Common myeloid progenitor, CD34-positive (primary cell): ENCODE measurements at regions of chr4 and their contacts with region 1.

Region 1: GRCh38 chr4:40897557-40898203 is 147.9 kb downstream of the NSUN7 start:
- DNase-seq: peak; percentile 65 to 70 (median 70)
- H3K4me3 ChIP-seq: peak overlapping the region in 5 of 7 experiments; percentile 10 to 63 (median 35)
- H3K27ac ChIP-seq: no peak overlapping the region
- H3K4me1 ChIP-seq: peaks cover 0 to 2% (median 0%) of the 10 kb centered on the region in 4 experiments
- H3K27me3 ChIP-seq: no peaks in the 10 kb centered on the region

Region 2: DNA sequence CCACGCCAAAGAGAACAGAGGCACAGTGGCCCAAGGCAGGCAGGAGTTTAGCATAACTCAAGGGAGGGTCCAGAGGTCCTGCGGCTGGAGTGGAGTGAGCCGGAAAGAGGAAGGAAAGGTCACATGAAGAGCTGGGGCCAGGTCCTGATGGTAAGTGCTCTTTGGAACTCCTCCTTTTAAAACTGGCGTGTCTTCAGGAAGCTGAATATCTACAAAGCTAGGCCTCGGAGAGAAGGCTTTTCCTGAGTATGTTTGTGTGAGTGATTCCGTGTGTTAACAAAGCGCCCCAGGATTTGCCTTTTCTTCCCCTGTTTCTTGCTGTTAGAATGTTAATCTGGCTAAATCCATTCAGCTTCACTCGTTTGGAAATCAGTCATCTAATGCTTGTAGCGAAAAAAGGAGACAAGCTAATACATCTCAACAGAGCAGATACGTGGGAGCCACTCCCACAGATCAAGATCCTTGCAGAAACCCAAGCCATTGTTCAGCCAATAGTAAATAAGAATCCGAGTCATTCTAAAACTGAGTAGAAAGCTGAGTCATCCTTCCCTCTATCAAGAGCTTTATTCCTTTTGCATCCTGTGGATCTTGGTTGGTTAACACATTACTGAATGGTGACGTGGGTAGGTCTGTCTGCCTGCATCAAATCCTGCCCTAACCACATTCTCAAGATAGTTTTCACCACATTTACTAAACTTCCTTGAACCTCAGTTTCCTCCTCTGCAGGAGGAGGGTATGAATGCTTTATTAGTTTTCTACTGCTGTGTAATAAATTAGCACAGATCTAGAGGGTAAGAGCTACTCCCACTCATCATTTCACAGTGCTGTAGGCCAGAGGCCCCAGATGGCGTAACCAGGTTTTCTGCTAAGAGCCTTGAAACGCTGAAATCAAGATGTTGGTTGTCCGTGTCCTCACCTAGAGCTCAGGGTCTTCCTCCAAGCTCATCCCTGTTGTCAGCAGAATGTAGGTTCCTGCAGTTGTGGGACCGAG is 224.8 kb before region 1 on chr4:
- CTCF ChIA-PET with region 1: no interaction called
- POLR2A ChIA-PET with region 1: no interaction called
- DNase-seq: peak; percentile 90 to 97 (median 95)
- H3K4me3 ChIP-seq: peak overlapping the region in 2 of 7 experiments; percentile 12 to 50
- H3K27ac ChIP-seq: peak overlapping the region in 1 of 2 experiments; percentile 2
- H3K4me1 ChIP-seq: peaks cover 0 to 25% (median 9%) of the 10 kb centered on the region in 4 experiments
- H3K27me3 ChIP-seq: no peaks in the 10 kb centered on the region

Region 3: DNA sequence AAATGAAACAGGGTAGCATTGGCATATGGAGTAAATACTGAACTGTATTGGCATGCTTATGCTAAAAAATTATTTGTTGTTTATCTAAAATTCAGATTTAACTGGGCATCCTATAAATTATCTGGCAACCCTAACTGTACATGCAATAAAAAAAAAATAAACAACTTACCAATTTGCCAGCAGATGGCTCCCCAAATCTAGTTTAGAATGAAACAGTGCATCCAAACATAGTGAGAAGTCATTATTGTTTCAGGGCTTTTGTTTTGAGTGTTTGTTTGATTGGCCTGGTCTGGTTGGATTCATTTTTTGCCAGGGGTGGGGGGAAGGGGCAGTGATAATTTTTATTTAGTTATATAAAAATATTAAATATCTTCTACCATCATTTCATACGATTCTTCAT is 160.8 kb before region 1 on chr4:
- CTCF ChIA-PET with region 1: interaction called, 25 read pairs
- POLR2A ChIA-PET with region 1: no interaction called
- DNase-seq: peak; percentile 49 to 74 (median 69)
- H3K4me3 ChIP-seq: no peak overlapping the region
- H3K27ac ChIP-seq: no peak overlapping the region
- H3K4me1 ChIP-seq: peaks cover 5 to 11% (median 10%) of the 10 kb centered on the region in 4 experiments
- H3K27me3 ChIP-seq: no peaks in the 10 kb centered on the region

Region 4: DNA sequence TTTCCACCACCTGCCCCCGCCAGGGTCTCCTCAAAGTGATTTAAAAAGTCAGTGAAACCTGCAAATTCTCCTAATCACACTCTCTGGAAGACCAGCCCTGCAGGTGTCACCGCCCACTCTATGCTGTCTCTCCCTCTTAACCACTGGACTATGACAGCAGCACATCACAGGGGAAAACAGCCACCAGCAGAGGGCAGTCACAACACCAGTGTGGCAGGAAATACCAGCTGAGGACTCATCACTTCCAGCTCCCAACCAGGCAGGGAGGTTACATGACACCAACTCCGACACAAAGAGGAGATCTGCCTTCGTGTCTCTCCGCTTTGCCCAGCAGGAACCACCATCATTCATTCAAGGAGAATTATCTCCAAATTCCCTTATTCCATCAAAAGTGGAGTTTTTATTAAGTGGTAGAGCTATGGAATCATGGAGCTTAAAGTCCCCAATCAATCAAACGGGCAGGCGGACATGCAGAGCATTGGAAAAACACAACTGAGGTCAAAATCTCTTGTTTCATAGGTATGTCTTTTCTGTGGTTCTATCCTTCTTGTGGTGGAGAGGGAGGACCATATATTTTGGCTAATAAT is 56.6 kb before region 1 on chr4:
- CTCF ChIA-PET with region 1: interaction called, 13 read pairs
- POLR2A ChIA-PET with region 1: no interaction called
- DNase-seq: peak; percentile 67 to 80 (median 77)
- H3K4me3 ChIP-seq: no peak overlapping the region
- H3K27ac ChIP-seq: no peak overlapping the region
- H3K4me1 ChIP-seq: peaks cover 0 to 2% (median 0%) of the 10 kb centered on the region in 4 experiments
- H3K27me3 ChIP-seq: no peaks in the 10 kb centered on the region

Region 5: DNA sequence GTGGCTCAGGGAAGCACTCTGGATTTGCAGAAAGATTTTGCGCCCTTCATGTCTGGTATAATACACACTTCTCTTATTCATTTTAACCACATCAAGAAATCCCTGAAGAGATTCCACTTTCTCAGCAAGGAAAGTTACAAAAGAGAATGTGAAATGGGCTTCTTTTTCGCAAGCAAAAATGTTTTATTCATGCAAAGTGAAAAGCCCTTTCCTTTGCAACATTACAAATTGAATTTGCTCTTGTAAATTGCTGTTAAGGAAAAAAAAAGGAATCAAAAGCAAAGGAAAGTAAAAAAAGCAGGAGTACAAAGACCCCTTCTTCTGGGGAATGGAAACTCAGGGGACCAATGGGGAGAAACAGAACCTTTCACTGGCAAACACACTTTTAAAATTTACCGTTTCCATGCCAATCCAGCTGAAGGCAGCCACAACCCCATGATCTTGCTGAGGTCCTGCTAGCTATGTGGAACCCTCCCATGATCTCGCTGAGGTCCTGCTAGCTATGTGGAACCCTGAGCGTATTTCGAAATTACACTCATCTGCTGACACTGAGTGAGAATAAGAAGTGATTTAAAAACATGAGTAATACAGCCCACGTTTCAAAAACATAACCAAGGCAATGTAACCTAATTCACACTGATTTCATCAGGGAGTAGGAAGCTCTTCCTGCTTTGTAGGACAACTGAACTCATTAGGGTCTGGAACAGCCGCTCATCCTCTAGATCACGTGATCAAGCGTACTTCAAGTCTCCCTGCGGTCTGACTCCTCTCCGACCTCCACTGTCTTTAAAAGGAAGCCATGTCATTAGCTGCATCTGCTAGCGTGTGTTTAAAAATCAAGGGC is 10.2 kb before region 1 on chr4:
- CTCF ChIA-PET with region 1: interaction called, 14 read pairs
- POLR2A ChIA-PET with region 1: no interaction called
- DNase-seq: no peak
- H3K4me3 ChIP-seq: no peak overlapping the region
- H3K27ac ChIP-seq: no peak overlapping the region
- H3K4me1 ChIP-seq: peaks cover 0 to 22% (median 7%) of the 10 kb centered on the region in 4 experiments
- H3K27me3 ChIP-seq: no peaks in the 10 kb centered on the region

Region 6: DNA sequence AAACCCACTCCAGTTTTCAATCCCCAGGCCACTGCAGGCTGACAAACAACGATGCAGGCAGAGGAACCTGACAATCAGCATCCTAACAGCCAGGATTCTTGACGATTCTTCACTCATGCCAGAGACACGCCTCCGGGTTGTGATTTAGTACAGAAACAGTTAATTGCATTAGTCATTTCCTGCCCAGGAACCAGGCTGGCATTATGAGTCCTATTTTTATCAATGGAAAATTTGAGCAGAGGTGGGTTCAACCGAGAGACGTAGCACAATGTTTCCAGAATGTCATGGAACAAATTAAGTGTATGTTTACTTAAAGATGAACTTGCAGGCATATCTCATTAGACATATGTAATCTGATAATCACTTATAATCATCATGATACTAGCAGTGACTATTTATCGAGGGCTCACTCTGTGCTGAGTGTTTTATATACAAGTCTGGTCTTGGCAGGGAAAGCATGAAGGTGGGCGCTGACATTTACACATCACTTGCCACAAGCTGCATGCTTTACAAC is 11.7 kb after region 1 on chr4:
- CTCF ChIA-PET with region 1: interaction called, 23 read pairs
- POLR2A ChIA-PET with region 1: no interaction called
- DNase-seq: peak; percentile 32 to 84 (median 70)
- H3K4me3 ChIP-seq: peak overlapping the region in 1 of 7 experiments; percentile 23
- H3K27ac ChIP-seq: no peak overlapping the region
- H3K4me1 ChIP-seq: peaks cover 4 to 18% (median 11%) of the 10 kb centered on the region in 4 experiments
- H3K27me3 ChIP-seq: no peaks in the 10 kb centered on the region